ENCODE measurements at regions of chr3 and their contacts with region 1.

Region 1: DNA sequence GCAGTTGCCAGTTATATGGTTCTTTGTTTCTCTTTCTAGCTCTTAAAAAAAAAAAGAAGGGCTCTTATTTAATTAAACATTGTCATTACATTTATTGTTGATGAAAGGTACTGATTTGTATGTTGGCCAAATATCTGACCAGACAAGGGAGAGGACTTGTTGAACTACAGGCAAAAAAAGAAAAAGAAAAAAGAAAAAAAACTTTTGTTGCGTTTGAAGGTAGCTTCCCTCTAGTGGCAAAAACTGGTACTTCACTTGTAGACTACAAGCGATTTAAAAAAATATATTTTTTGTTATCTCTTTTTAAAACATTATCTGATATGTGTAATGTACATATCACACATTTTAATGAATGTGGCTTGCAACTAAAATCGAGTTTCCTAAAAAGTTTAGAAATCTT is 280.6 kb downstream of the ROBO2 start:
- DNase-seq: peak; percentile 36
- H3K4me3 Mint-ChIP-seq: no peak overlapping the region
- H3K27ac Mint-ChIP-seq: no peak overlapping the region
- H3K4me1 Mint-ChIP-seq: peaks cover 6% of the 10 kb centered on the region
- H3K27me3 Mint-ChIP-seq: no peaks in the 10 kb centered on the region
- CTCF ChIP-seq: peak; percentile 45

Region 2: DNA sequence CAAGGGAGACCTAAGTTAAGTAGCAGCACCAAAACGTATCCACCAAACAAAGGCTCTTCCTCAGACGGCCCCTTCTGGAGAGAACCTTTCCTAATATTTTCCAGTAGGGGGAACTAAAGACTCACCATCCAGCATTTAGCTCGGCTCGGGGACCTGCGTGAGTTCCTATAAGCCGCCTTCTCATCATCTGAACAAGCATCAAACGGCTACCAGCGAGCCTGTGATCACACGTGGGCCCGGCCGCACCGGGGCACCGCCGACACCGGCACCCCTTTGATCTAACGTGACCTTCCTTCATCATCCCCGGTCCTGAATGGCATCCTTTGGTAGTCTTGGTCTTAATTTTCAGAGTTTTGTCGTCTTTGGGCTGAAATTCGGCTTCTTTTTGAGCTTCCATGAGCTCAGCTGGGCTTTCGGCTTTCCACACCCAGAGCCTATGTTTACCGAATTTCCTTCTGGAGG is 282.0 kb before region 1 on chr3:
- CTCF ChIA-PET with region 1: interaction called, 11 read pairs
- POLR2A ChIA-PET with region 1: no interaction called
- intact Hi-C with region 1: loop called (anchors 2 kb)
- DNase-seq: peak; percentile 79
- H3K4me3 Mint-ChIP-seq: peak overlapping the region; percentile 61
- H3K27ac Mint-ChIP-seq: no peak overlapping the region
- H3K4me1 Mint-ChIP-seq: peaks cover 10% of the 10 kb centered on the region
- H3K27me3 Mint-ChIP-seq: peaks cover 90% of the 10 kb centered on the region
- CTCF ChIP-seq: peak; percentile 65

Region 3: DNA sequence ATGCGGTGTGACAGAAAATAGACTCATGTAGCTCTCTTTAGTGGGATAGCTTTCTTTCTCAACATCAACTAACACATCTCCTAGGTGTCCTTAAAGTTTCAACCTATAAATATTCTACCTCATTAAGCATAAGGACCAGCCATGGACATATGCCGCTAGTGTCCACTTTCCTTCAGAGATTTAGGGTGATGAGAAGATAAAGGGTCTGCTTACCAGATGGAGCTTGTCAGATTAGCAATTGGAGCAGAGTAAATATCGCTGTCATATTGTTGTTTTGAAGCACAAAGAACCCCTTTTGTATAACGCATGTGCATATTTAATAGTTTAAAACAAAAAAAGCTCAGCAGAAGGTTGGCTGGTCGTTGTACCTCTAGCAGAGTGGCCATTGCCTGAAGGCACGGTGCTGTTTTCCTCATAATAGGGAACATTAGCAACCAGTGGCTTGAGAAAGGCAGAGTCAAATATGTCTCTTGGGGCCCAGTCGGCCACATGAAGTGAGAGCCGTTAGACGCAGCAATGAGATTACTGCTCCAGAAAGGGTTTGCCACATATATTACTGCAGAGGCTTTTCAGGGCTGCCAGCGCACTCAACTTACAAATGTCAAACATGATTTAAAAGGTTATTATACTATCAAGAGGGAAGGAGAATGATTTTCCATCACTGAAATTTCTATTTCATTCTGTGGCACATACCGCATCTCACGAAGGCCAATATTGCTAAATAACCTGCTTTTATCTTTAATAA is 16.4 kb before region 1 on chr3:
- CTCF ChIA-PET with region 1: interaction called, 12 read pairs
- POLR2A ChIA-PET with region 1: no interaction called
- intact Hi-C with region 1: no loop called
- DNase-seq: no peak
- H3K4me3 Mint-ChIP-seq: no peak overlapping the region
- H3K27ac Mint-ChIP-seq: no peak overlapping the region
- H3K4me1 Mint-ChIP-seq: no peaks in the 10 kb centered on the region
- H3K27me3 Mint-ChIP-seq: no peaks in the 10 kb centered on the region
- CTCF ChIP-seq: no peak

Region 4: DNA sequence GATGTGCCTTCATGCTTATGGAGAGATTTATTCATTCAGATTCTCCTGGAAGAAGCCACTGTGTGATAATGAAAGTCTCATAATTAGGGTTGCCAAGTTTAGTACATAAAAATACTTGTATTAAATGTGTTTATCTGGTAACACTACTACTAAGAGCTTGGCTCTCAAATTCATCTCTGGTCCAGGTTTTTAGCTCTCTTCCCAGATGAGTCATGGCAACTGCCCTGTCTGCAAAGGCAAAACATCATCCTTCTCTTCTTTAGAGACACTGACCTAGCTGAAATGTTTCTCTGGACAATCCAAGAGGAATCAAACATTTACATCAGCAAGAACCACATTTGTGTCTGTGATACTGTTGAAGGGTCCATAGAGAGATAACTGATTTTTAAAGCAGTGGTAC is 11.1 kb before region 1 on chr3:
- CTCF ChIA-PET with region 1: interaction called, 12 read pairs
- POLR2A ChIA-PET with region 1: no interaction called
- intact Hi-C with region 1: no loop called
- DNase-seq: no peak
- H3K4me3 Mint-ChIP-seq: no peak overlapping the region
- H3K27ac Mint-ChIP-seq: no peak overlapping the region
- H3K4me1 Mint-ChIP-seq: no peaks in the 10 kb centered on the region
- H3K27me3 Mint-ChIP-seq: no peaks in the 10 kb centered on the region
- CTCF ChIP-seq: no peak

Measured in MCF 10A (cell line).